Heart right ventricle (tissue), 16 donors: ENCODE measurements at regions of chr6 and their contacts with region 1.

Region 1: DNA sequence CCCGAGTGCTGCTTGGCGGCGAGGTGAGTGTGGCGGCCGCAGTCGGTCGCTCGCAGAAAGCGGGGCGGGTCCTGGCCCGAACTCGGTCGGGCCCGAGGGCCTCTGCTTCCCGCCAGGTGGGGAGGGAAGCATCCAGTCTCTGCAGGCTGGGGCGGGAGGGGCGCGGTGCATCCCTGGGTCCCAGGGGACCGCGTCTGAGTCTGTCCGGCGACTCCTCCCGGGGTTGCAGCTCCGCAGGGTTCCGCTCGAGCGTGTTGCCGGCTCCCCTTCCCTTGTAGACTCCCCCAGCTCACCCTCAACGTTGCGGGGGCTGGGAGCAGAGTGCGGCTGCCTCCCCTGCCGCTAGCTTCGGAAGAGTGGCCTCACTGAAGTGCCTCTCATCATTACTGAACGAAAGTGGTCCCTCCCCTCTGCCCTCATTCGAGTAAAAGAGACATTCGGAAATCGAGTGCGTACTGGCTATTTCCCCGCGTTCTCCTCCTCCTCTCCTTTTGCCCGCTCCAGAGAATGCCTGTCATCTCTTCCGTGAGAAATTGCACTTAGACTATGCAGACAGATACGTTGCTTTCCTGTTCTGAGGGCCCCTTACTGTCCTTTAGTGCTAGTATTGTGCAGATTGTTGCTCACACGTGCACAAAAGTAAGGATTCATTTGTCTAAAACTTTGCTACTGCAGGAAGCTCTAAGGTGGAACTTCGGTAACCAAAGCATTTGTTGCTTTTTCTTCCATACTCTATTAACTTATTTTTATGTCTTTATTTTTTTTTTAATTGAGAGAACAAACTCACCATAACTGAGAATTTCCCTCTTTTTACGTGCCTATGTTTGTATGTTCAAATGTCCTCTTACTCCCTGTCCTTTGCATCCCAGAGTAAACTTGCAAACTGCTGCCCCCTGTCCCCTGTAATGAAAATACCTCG is 751 bp downstream of the MAP3K4 start:
- DNase-seq: peak; percentile 59 to 61
- ATAC-seq: peak; percentile 45 to 78 (median 74)
- H3K4me3 ChIP-seq: peak overlapping the region; percentile 67 to 100 (median 97)
- H3K27ac ChIP-seq: peak overlapping the region; percentile 81 to 99 (median 97)
- H3K4me1 ChIP-seq: peaks cover 0 to 50% (median 31%) of the 10 kb centered on the region in 9 donors
- H3K27me3 ChIP-seq: no peaks in the 10 kb centered on the region
- CTCF ChIP-seq: peak in 7 of 9 donors; percentile 40 to 77 (median 66)

Region 2: DNA sequence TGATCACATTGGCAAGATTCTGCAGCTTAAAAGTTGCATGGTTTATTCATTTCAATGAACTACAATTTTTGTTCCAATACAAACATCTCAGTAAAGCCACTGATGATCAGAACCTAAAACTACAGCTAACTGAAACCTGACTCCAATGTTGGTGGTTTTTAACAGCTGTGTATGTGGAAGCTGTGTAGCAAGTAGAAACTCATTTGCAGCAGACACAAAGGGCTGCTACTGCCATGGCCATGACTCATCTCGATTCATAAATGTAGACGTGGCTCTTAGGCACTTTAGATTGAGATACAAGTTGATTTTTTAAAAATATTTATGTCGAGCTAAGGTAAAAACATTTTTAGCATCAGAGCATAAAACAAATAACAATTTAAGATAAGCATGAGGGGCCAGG is 20.2 kb before region 1 on chr6:
- intact Hi-C with region 1: loop called in 1 of 10 experiments (anchors 2 kb)
- DNase-seq: no peak
- ATAC-seq: peak in 1 of 8 donors; percentile 45
- H3K4me3 ChIP-seq: no peak overlapping the region
- H3K27ac ChIP-seq: peak overlapping the region in 6 of 10 donors; percentile 11 to 91 (median 78)
- H3K4me1 ChIP-seq: peaks cover 0 to 46% (median 27%) of the 10 kb centered on the region in 9 donors
- H3K27me3 ChIP-seq: no peaks in the 10 kb centered on the region
- CTCF ChIP-seq: no peak

Region 3: DNA sequence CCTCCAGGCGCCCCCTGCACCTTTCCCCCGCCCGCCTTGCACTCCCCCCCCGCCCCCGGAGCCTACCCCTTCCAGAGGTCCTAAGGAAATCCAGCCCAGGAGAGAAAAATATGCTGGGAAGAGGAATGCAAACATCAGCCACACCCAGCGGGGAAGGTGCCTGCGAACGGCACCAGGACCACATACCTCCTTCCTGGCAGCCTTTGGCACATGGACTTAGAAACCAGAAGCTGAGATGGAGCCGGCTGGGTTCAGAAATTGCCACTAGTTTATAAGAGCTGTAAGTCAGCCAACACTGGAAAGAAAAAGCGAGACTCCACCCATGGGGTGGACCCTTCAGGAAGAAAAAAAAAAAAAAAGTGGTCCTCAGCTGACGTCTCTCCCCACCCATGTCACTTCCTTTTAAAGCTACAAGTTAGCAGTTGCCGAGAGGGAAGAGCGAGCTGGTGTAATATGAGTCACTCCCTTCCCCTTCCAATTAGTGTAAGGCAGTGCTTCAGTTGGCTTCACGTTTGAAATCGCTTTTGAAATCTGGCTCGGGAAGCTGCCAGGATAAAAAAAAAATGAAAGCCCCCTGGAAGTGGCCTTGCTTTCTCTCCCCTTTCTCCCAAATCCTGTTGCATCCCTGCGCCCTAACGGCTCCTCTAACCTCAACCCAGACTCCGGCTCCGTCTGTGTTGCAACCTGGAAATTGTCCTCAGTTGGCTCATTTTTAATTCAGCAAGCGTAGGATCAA is 281.6 kb after region 1 on chr6 and contains the start of gene AGPAT4:
- intact Hi-C with region 1: loop called in 1 of 10 experiments (anchors 10 kb)
- DNase-seq: peak in 1 of 2 donors; percentile 78
- ATAC-seq: peak; percentile 96 to 100 (median 99)
- H3K4me3 ChIP-seq: peak within 1 kb of the TSS; percentile 44 to 73 (median 66)
- H3K27ac ChIP-seq: peak within 1 kb of the TSS in 9 of 10 donors; percentile 38 to 84 (median 62)
- H3K4me1 ChIP-seq: peaks cover 0 to 20% (median 12%) of the 10 kb centered on the region in 9 donors
- H3K27me3 ChIP-seq: peaks cover 0 to 5% (median 0%) of the 10 kb centered on the region in 7 donors
- CTCF ChIP-seq: no peak
- total RNA-seq, gene AGPAT4: 1.3 to 3.8 (median 1.9) TPM